Breast epithelium (tissue), 4 donors: ENCODE measurements at regions of chr3 and their contacts with region 1.

Region 1: GRCh38 chr3:65107174-65107573 is 419.4 kb upstream of the ADAMTS9 start:
- DNase-seq: no peak
- H3K4me3 ChIP-seq: no peak overlapping the region
- H3K27ac ChIP-seq: no peak overlapping the region
- H3K4me1 ChIP-seq: no peaks in the 10 kb centered on the region
- H3K27me3 ChIP-seq: no peaks in the 10 kb centered on the region
- CTCF ChIP-seq: no peak
- POLR2A ChIP-seq: no peak

Region 2: GRCh38 chr3:65126527-65127410 is 19.6 kb after region 1 on chr3:
- intact Hi-C with region 1: no loop called
- DNase-seq: no peak
- H3K4me3 ChIP-seq: no peak overlapping the region
- H3K27ac ChIP-seq: peak overlapping the region in 1 of 2 donors; percentile 6
- H3K4me1 ChIP-seq: no peaks in the 10 kb centered on the region
- H3K27me3 ChIP-seq: no peaks in the 10 kb centered on the region
- CTCF ChIP-seq: no peak
- POLR2A ChIP-seq: no peak

Region 3: DNA sequence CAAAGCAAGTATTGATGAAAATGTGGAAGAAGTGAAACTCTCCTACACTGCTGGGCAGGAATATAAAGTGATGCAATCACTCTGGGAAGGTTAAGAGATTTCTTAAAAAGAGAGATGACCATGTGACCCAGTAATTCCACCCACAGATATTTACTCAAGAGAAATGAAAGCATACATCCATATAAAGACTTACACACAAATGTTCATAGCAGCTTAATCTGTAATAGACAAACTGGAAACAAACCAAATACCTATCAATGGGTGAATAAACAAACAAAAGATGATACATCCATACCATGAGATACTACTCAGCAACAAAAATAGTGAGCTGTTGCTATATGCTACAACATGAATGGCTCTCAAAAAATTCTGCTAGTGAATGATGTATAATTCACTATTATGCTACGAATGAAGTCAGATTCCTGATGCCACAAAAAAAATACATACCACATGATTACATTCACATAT is 468.2 kb after region 1 on chr3:
- intact Hi-C with region 1: loop called (anchors 5 kb)
- DNase-seq: no peak
- H3K4me3 ChIP-seq: no peak overlapping the region
- H3K27ac ChIP-seq: no peak overlapping the region
- H3K4me1 ChIP-seq: no peaks in the 10 kb centered on the region
- H3K27me3 ChIP-seq: no peaks in the 10 kb centered on the region
- CTCF ChIP-seq: no peak
- POLR2A ChIP-seq: no peak